K562 (cell line): ENCODE measurements at regions of chr15 and their contacts with region 1.

Region 1: DNA sequence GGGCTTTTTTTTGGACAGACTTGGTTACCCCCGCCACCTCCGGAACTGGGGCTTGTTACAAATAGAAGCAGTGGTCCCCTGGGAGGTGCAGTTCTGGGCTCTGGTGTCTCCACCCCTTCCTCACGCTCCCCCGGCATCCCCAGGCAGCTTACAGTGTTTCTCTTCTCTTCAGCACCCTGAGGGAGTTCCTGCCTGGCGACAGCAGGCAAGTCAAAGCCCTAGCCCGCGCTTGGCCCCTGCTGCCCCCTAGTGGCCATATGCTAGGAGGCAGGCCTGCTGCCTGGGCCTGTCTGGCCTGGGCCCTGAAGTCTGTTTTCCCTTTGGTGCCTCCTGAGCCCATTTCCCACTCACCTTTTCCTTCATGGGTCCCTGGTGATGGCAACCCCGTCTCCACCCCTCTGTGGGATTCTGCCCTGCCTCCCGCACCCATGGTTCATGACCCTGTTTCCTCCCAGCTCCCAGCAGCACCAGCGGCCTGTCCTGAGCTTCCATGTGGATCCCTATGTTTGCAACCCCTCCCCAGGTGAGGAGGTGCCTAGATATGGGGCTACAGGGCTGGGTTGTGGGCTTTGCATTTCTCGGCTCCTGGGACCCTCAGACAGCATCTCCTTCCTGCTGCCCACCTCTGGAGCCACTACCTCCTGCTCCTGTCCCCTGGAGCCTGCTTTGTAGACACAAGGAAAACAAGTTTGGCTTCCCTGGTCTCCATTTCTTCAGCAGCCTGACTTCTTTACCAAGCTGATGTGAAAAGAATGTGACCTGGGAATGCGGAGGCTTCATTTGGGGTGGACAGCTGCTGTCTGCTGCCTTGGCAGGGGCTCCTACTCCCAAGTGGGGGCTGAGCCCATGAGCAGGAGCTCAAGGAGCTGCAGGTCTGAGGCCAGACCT is 2.2 kb downstream of the SNX22 start:
- DNase-seq: peak; percentile 78 to 93 (median 84)
- ATAC-seq: peak; percentile 88
- H3K4me3 ChIP-seq: no peak overlapping the region
- H3K27ac ChIP-seq: peak overlapping the region; percentile 45; the same call in 2 of the 3 replicates
- H3K4me1 ChIP-seq: peaks cover 16 to 58% of the 10 kb centered on the region in 2 experiments; a peak in 4 of 5 replicates
- H3K27me3 ChIP-seq: no peaks in the 10 kb centered on the region
- CTCF ChIP-seq: peak; percentile 94 to 97 (median 96)
- EP300 ChIP-seq: no peak
- POLR2A ChIP-seq: peak; percentile 77
- RAD21 ChIP-seq: peak; percentile 67 to 90

Region 2: GRCh38 chr15:63466378-63467192 is 687.1 kb before region 1 on chr15:
- CTCF ChIA-PET with region 1: no interaction called
- POLR2A ChIA-PET with region 1: no interaction called
- in situ Hi-C with region 1: no loop called
- intact Hi-C with region 1: loop called (anchors 5 kb)
- DNase-seq: peak; percentile 66 to 81 (median 74)
- ATAC-seq: peak; percentile 96
- H3K4me3 ChIP-seq: no peak overlapping the region
- H3K27ac ChIP-seq: no peak overlapping the region
- H3K4me1 ChIP-seq: peaks cover 0 to 8% of the 10 kb centered on the region in 2 experiments; a peak in 2 of 5 replicates
- H3K27me3 ChIP-seq: no peaks in the 10 kb centered on the region
- CTCF ChIP-seq: peak; percentile 71 to 77 (median 76)
- EP300 ChIP-seq: no peak
- POLR2A ChIP-seq: no peak
- RAD21 ChIP-seq: peak; percentile 74 to 89

Region 3: GRCh38 chr15:63610200-63610841 is 543.4 kb before region 1 on chr15:
- CTCF ChIA-PET with region 1: no interaction called
- POLR2A ChIA-PET with region 1: no interaction called
- in situ Hi-C with region 1: no loop called
- intact Hi-C with region 1: loop called (anchors 10 kb)
- DNase-seq: peak; percentile 70 to 84 (median 76)
- ATAC-seq: peak; percentile 97
- H3K4me3 ChIP-seq: no peak overlapping the region
- H3K27ac ChIP-seq: peak overlapping the region; percentile 57
- H3K4me1 ChIP-seq: peaks cover 0 to 11% of the 10 kb centered on the region in 2 experiments; a peak in 3 of 5 replicates
- H3K27me3 ChIP-seq: no peaks in the 10 kb centered on the region
- CTCF ChIP-seq: peak; percentile 78 to 90 (median 81)
- EP300 ChIP-seq: no peak
- POLR2A ChIP-seq: no peak
- RAD21 ChIP-seq: peak; percentile 67 to 86

Region 4: GRCh38 chr15:64093627-64094417 is 59.9 kb before region 1 on chr15 and contains the start of gene CIAO2A:
- CTCF ChIA-PET with region 1: no interaction called
- POLR2A ChIA-PET with region 1: interaction called, 7 read pairs
- in situ Hi-C with region 1: no loop called
- intact Hi-C with region 1: loop called (anchors 2 kb)
- DNase-seq: peak; percentile 85 to 99 (median 89)
- ATAC-seq: peak; percentile 84
- H3K4me3 ChIP-seq: peak within 1 kb of the TSS; percentile 81
- H3K27ac ChIP-seq: peak within 1 kb of the TSS; percentile 99
- H3K4me1 ChIP-seq: peaks cover 8 to 25% of the 10 kb centered on the region in 2 experiments
- H3K27me3 ChIP-seq: no peaks in the 10 kb centered on the region
- CTCF ChIP-seq: no peak; a peak in 1 of 6 replicates
- EP300 ChIP-seq: peak; percentile 30
- POLR2A ChIP-seq: peak; percentile 88
- RAD21 ChIP-seq: no peak
- polyA plus RNA-seq, gene CIAO2A: 354 to 408 TPM

Region 5: DNA sequence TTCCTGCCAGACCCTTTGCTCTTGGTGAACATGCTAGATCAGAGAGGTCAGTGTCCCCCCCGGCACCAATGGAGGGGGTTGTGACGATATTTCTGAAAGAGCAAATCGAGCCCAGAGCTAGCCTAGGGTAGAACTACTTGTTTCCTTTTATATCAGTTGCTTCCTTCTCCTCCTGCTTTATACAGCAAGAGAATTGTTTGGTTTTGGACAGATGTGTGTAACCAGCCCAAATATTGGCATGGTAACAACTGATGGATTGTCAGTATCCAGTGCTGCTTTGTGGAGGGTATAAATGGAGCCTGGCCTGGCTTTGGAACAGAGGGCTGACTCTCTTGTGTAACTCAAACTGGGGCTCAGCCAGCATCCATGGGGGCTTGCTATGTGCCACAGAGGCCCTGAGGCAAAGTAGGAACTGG is 30.8 kb before region 1 on chr15:
- CTCF ChIA-PET with region 1: no interaction called
- POLR2A ChIA-PET with region 1: no interaction called
- in situ Hi-C with region 1: no loop called
- intact Hi-C with region 1: no loop called
- DNase-seq: no peak
- ATAC-seq: no peak
- H3K4me3 ChIP-seq: no peak overlapping the region
- H3K27ac ChIP-seq: no peak overlapping the region
- H3K4me1 ChIP-seq: no peaks in the 10 kb centered on the region
- H3K27me3 ChIP-seq: no peaks in the 10 kb centered on the region
- CTCF ChIP-seq: no peak
- EP300 ChIP-seq: no peak
- POLR2A ChIP-seq: no peak
- RAD21 ChIP-seq: no peak